ENCODE measurements at regions of chr11 and their contacts with region 1.

Region 1: DNA sequence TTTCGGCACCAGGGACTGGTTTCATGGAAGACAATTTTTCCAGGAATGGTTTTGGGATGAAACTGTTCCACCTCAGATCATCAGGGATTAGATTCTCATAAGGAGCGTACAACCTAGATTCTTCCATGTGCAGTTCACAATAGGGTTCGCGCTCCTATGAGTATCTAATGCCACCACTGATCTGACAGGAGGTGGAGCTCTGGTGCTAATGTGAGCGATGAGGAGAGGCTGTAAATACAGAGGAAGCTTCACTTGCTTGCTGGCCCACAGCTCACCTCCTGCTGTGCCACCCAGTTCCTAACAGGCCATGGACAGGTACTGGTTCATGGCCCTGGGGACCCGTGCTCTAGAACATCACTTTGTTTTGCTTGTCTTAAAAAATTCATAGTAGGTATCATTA is 41.8 kb upstream of the AMPD3 start:
- DNase-seq: peak; percentile 20
- H3K4me3 ChIP-seq: no peak overlapping the region
- H3K27ac ChIP-seq: no peak overlapping the region
- H3K4me1 ChIP-seq: peaks cover 13% of the 10 kb centered on the region
- H3K27me3 ChIP-seq: peaks cover 2 to 5% of the 10 kb centered on the region in 2 experiments
- CTCF ChIP-seq: peak in 1 of 2 donors; percentile 16
- POLR2A ChIP-seq: no peak

Region 2: GRCh38 chr11:10426475-10426874 is 13.2 kb after region 1 on chr11:
- CTCF ChIA-PET with region 1: interaction called, 10 read pairs
- POLR2A ChIA-PET with region 1: no interaction called
- dilution Hi-C with region 1: no loop called
- intact Hi-C with region 1: no loop called
- DNase-seq: no peak
- H3K4me3 ChIP-seq: no peak overlapping the region
- H3K27ac ChIP-seq: no peak overlapping the region
- H3K4me1 ChIP-seq: no peaks in the 10 kb centered on the region
- H3K27me3 ChIP-seq: peaks cover 6% of the 10 kb centered on the region in 2 experiments
- CTCF ChIP-seq: no peak
- POLR2A ChIP-seq: no peak

Region 3: GRCh38 chr11:10455637-10456487 is 42.6 kb after region 1 on chr11:
- CTCF ChIA-PET with region 1: interaction called, 18 read pairs
- POLR2A ChIA-PET with region 1: no interaction called
- dilution Hi-C with region 1: no loop called
- intact Hi-C with region 1: no loop called
- DNase-seq: peak; percentile 38
- H3K4me3 ChIP-seq: peak overlapping the region in 1 of 3 experiments; percentile 11
- H3K27ac ChIP-seq: no peak overlapping the region
- H3K4me1 ChIP-seq: peaks cover 4% of the 10 kb centered on the region
- H3K27me3 ChIP-seq: peaks cover 0 to 11% of the 10 kb centered on the region in 2 experiments
- CTCF ChIP-seq: no peak
- POLR2A ChIP-seq: no peak

Measured in endothelial cell of umbilical vein (primary cell).